GM10248 (cell line): ENCODE measurements at regions of chr2 and their contacts with region 1.

Region 1: GRCh38 chr2:65070172-65070830 is 14.1 kb downstream of the CEP68 start:
- DNase-seq: no peak
- CTCF ChIP-seq: no peak

Region 2: GRCh38 chr2:65017335-65017734 is 53.0 kb before region 1 on chr2:
- CTCF ChIA-PET with region 1: no interaction called
- POLR2A ChIA-PET with region 1: no interaction called
- DNase-seq: peak; percentile 53
- CTCF ChIP-seq: peak; percentile 55

Region 3: DNA sequence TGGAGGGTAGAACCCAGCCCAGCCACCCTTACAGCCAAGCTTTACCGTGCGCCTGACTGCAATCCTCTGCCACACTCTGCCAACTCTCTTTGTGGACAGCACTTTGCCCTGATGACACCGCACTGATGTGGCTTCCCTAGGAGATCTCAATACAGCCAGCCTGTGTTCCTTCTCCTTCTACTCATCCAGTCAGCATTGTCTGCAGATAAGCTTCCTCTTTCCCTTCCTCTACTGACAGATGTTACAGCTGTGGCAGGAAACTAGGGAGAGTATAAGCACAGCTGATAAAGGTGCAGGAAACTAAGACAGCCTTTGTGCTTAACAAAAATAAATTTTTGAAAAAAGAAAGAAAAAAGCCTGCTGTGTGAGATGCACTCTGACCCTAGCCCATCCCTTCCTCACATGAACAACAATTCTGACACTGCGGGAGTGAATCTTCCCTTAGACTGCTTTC is 11.0 kb after region 1 on chr2:
- CTCF ChIA-PET with region 1: interaction called, 30 read pairs
- POLR2A ChIA-PET with region 1: no interaction called
- DNase-seq: no peak
- CTCF ChIP-seq: no peak